ENCODE measurements at regions of chr12 and their contacts with region 1.

Region 1: DNA sequence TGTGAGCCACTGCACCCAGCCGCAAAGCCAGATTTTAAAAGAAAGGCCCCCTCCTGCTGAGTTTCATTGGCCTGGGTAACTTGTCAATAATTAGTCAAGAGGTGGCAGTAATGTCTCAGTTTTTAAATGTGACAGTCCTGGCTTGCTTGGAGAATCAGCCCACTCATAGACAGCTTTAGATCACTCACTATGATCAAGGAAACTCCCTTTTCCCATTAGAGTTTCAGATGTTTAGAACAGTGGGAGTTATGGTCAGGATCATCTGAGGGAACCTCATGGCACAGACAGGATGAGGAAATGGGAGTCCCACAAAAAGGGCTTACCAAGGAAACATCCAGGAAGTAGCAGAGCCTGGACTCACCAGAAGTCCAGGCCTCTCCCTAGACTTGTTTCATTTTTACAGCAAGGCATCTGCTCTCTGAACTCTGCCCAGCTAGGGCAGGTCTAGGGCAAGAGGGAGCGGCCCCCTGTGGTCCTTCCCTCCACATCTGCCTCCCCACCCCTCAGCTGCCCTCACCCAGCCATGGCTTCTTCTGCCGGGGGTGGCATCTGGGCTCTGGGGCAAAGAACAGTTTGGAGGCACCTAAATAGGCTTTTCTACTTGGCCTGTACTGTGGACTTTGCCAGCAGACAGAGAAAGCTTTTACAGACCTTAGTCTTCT is 11.2 kb downstream of the BCL2L14 start:
- DNase-seq: no peak
- ATAC-seq: peak; percentile 81

Region 2: DNA sequence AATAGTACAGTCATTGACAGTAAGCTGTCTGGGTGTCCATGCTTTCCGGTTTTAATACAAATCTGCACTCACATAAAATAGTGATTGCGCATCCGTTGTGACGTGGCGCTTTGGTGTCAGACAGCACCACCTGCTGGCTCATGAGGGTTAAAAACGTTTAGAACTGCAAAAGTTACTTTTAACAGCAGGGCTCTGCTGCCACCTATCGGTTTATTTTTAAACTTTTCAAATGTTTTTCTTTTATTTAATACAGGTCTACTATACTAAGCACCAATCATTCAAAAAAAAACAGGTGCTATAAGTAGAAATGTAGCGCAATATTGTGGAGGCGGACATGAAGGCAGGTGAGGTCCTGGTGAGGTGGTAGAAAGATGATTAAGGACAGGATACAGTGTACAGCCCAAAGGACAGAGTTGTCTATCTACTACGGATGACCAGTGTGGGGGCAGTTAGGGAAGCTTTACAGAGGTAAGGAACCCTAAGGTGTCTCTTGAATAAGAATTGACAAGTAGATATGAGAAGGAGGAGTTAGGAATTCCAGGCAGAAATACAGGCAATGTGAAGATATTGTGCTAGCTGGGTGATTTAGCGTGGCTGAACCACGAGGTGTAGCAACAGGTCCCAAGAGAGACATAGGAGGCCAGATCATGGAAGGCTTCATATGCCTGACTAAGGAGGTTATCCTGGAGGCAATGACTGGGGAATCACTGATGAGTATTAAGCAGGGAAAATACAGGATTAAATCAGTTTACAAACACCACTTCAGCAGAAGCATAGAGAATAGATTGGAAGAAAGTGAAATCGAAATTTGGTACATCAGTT is 595.1 kb before region 1 on chr12:
- intact Hi-C with region 1: no loop called
- DNase-seq: peak; percentile 83
- ATAC-seq: peak; percentile 81 to 84

Region 3: DNA sequence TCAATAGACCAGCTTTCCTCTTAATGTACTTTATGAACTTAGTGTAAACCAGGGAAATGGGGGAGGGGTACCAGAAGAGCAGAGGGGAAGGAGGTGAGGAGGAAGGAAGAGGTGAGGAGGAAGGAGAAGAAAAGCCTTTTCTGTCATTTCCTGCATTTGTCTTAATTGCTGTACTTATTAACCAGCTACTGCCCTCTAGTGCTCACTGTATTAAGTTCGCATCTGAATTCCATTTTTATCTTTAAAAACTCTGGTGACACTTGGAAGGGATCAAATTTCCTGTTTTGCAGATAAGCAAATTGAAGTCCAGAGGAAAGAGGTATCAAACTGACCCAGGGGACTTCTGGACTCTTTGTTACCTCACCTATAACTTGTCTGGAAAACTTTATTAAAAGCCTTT is 245.8 kb after region 1 on chr12:
- intact Hi-C with region 1: loop called (anchors 2 to 5 kb)
- DNase-seq: no peak
- ATAC-seq: peak; percentile 27 to 47

Region 4: GRCh38 chr12:12334367-12335040 is 252.5 kb after region 1 on chr12:
- intact Hi-C with region 1: loop called (anchors 2 to 5 kb)
- DNase-seq: peak; percentile 50
- ATAC-seq: peak; percentile 48 to 72